ENCODE measurements at regions of chr12 and their contacts with region 1.

Region 1: GRCh38 chr12:29024117-29024516 is 125.0 kb upstream of the FAR2 start:
- DNase-seq: no peak
- H3K4me3 ChIP-seq: no peak overlapping the region
- H3K27ac ChIP-seq: no peak overlapping the region
- H3K4me1 ChIP-seq: no peaks in the 10 kb centered on the region; a peak in 1 of 7 replicates
- H3K27me3 ChIP-seq: no peaks in the 10 kb centered on the region
- CTCF ChIP-seq: peak in 1 of 3 experiments; percentile 23; a peak in 1 of 4 replicates
- EP300 ChIP-seq: no peak
- POLR2A ChIP-seq: no peak
- RAD21 ChIP-seq: no peak

Region 2: GRCh38 chr12:28830491-28830890 is 193.6 kb before region 1 on chr12:
- CTCF ChIA-PET with region 1: no interaction called
- POLR2A ChIA-PET with region 1: no interaction called
- DNase-seq: peak in 1 of 2 experiments; percentile 3
- H3K4me3 ChIP-seq: no peak overlapping the region
- H3K27ac ChIP-seq: no peak overlapping the region
- H3K4me1 ChIP-seq: peaks cover 0 to 3% (median 1%) of the 10 kb centered on the region in 4 experiments; a peak in 2 of 7 replicates
- H3K27me3 ChIP-seq: no peaks in the 10 kb centered on the region
- CTCF ChIP-seq: no peak
- EP300 ChIP-seq: no peak
- POLR2A ChIP-seq: no peak
- RAD21 ChIP-seq: no peak

Region 3: DNA sequence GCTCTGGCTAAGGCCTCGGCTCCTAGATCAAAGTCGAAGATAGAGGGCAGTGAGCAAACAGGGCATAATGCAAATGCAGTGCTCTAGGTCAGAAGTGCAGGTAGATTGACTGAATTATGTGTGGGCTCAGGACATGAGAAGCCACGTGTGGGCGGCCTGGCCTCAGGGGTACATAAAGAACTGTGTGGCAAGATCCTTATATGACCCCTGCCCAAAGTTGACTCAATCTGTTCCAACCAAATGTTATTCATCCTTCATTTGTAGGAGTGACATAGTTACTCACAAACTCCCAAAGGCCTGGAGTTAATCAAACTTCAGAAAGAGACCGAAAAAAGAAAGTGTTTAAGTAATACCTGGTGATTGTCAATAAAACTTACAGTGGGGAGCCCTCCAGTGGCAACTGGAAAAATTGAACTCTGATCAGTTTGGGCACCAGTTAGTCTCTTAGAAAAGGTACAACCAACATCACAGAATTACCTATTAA is 25.4 kb before region 1 on chr12:
- CTCF ChIA-PET with region 1: interaction called, 16 read pairs
- POLR2A ChIA-PET with region 1: no interaction called
- DNase-seq: no peak
- H3K4me3 ChIP-seq: no peak overlapping the region
- H3K27ac ChIP-seq: no peak overlapping the region
- H3K4me1 ChIP-seq: no peaks in the 10 kb centered on the region
- H3K27me3 ChIP-seq: no peaks in the 10 kb centered on the region
- CTCF ChIP-seq: peak in 2 of 3 experiments; percentile 29 to 50; a peak in 2 of 4 replicates
- EP300 ChIP-seq: no peak
- POLR2A ChIP-seq: no peak
- RAD21 ChIP-seq: peak; percentile 68 to 74

Region 4: GRCh38 chr12:29012673-29013072 is 11.4 kb before region 1 on chr12:
- CTCF ChIA-PET with region 1: interaction called, 14 read pairs
- POLR2A ChIA-PET with region 1: no interaction called
- DNase-seq: no peak
- H3K4me3 ChIP-seq: no peak overlapping the region
- H3K27ac ChIP-seq: no peak overlapping the region
- H3K4me1 ChIP-seq: no peaks in the 10 kb centered on the region
- H3K27me3 ChIP-seq: no peaks in the 10 kb centered on the region
- CTCF ChIP-seq: no peak
- EP300 ChIP-seq: no peak
- POLR2A ChIP-seq: no peak
- RAD21 ChIP-seq: no peak

Measured in H1 (cell line).